ENCODE measurements at regions of chr2 and their contacts with region 1.

Region 1: GRCh38 chr2:62195421-62196277 is at the start of gene B3GNT2:
- DNase-seq: peak; percentile 89 to 94
- ATAC-seq: peak; percentile 91
- H3K4me3 ChIP-seq: peak within 1 kb of the TSS; percentile 79 to 89
- H3K27ac ChIP-seq: peak within 1 kb of the TSS; percentile 52 to 83
- H3K4me1 ChIP-seq: no peaks in the 10 kb centered on the region
- H3K27me3 ChIP-seq: no peaks in the 10 kb centered on the region
- total RNA-seq, gene B3GNT2: 16.4 to 26.0 TPM

Region 2: GRCh38 chr2:61910603-61911002 is 285.0 kb before region 1 on chr2:
- intact Hi-C with region 1: loop called in 1 of 2 experiments (anchors 10 kb)
- DNase-seq: no peak
- ATAC-seq: no peak
- H3K4me3 ChIP-seq: no peak overlapping the region
- H3K27ac ChIP-seq: no peak overlapping the region
- H3K4me1 ChIP-seq: no peaks in the 10 kb centered on the region
- H3K27me3 ChIP-seq: no peaks in the 10 kb centered on the region

Region 3: GRCh38 chr2:62014102-62014501 is 181.5 kb before region 1 on chr2:
- intact Hi-C with region 1: loop called (anchors 5 kb)
- DNase-seq: peak; percentile 80
- ATAC-seq: peak; percentile 95
- H3K4me3 ChIP-seq: no peak overlapping the region
- H3K27ac ChIP-seq: peak overlapping the region in 1 of 2 donors; percentile 36
- H3K4me1 ChIP-seq: no peaks in the 10 kb centered on the region
- H3K27me3 ChIP-seq: no peaks in the 10 kb centered on the region

Region 4: GRCh38 chr2:62074233-62074632 is 121.4 kb before region 1 on chr2:
- intact Hi-C with region 1: no loop called
- DNase-seq: no peak
- ATAC-seq: no peak
- H3K4me3 ChIP-seq: no peak overlapping the region
- H3K27ac ChIP-seq: no peak overlapping the region
- H3K4me1 ChIP-seq: peaks cover 0 to 4% of the 10 kb centered on the region in 2 donors
- H3K27me3 ChIP-seq: no peaks in the 10 kb centered on the region

Region 5: DNA sequence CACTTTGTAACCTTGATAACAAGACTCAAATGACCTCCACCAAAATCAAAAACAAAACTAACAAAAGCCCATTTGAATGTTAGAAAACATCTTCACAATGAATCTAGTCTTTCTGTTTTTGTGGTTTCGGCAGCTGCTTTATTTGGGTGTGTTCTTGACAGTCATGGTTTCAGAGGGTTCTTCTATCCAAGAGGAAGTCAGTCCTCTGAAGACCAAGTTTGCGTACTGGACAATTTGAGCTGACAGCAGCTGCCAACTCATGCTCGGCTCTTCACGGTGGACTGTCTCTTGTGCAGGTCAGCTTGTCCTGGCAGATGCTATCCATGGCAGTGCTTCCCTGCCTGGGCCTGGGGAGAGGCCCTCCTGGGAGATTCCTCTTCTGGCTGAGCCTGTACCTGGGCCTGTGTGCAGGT is 219.4 kb after region 1 on chr2:
- intact Hi-C with region 1: loop called in 1 of 2 experiments (anchors 10 kb)
- DNase-seq: no peak
- ATAC-seq: no peak
- H3K4me3 ChIP-seq: no peak overlapping the region
- H3K27ac ChIP-seq: no peak overlapping the region
- H3K4me1 ChIP-seq: no peaks in the 10 kb centered on the region
- H3K27me3 ChIP-seq: no peaks in the 10 kb centered on the region

Measured in aorta (tissue), 5 donors.